Heart left ventricle (tissue), 16 donors: ENCODE measurements at regions of chr11 and their contacts with region 1.

Region 1: GRCh38 chr11:29448246-29448877 is 568.5 kb downstream of the KCNA4 start:
- DNase-seq: no peak
- ATAC-seq: peak in 1 of 4 donors; percentile 54
- H3K4me3 ChIP-seq: no peak overlapping the region
- H3K27ac ChIP-seq: no peak overlapping the region
- H3K4me1 ChIP-seq: peaks cover 0 to 3% (median 0%) of the 10 kb centered on the region in 12 donors
- H3K27me3 ChIP-seq: no peaks in the 10 kb centered on the region
- CTCF ChIP-seq: peak; percentile 18 to 68 (median 50)
- POLR2A ChIP-seq: no peak

Region 2: GRCh38 chr11:29507376-29507775 is 59.0 kb after region 1 on chr11:
- intact Hi-C with region 1: no loop called
- DNase-seq: no peak
- ATAC-seq: no peak
- H3K4me3 ChIP-seq: no peak overlapping the region
- H3K27ac ChIP-seq: no peak overlapping the region
- H3K4me1 ChIP-seq: no peaks in the 10 kb centered on the region
- H3K27me3 ChIP-seq: no peaks in the 10 kb centered on the region
- CTCF ChIP-seq: no peak
- POLR2A ChIP-seq: no peak

Region 3: DNA sequence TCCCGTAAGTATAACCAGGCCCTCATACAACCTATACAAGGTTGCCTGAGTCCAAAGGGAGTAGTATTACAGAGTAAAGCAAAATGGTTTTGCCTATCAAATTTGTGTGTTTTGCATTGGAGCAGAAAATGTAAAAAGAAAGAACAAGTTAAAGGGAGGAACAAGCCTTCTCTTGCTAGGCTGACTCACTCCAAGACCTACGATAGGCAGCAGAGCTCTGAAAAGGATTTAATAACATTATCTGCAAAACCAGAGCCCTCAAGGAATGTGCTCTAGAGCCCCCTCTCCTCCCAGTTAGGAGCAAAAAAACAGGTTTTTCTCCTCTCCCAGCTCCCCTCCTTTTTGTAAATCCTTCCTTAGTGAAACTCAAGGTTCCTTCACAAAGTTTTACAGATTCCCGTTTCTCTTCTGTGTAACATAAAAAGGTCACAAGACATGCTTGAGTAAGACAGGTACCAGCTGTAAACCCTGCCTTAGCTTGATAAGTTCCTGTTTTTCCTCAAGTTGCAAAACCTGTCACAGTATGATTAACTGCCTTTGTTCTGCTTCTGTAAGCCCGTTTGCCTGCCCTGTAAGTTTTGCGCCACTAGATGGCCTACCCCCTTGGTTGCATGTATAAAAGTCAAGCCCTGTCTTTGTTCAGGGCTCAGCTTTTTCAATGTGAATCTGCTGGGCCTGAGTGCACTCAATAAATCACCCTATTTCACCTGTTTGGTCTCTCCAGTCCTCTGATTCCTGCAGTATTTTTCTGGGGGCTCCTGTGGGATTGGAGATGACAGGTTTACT is 70.2 kb after region 1 on chr11:
- intact Hi-C with region 1: no loop called
- DNase-seq: no peak
- ATAC-seq: no peak
- H3K4me3 ChIP-seq: no peak overlapping the region
- H3K27ac ChIP-seq: no peak overlapping the region
- H3K4me1 ChIP-seq: no peaks in the 10 kb centered on the region
- H3K27me3 ChIP-seq: no peaks in the 10 kb centered on the region
- CTCF ChIP-seq: no peak
- POLR2A ChIP-seq: no peak

Region 4: GRCh38 chr11:29534836-29535235 is 86.5 kb after region 1 on chr11:
- intact Hi-C with region 1: loop called in 1 of 10 experiments (anchors 10 kb)
- DNase-seq: no peak
- ATAC-seq: no peak
- H3K4me3 ChIP-seq: no peak overlapping the region
- H3K27ac ChIP-seq: no peak overlapping the region
- H3K4me1 ChIP-seq: peaks cover 0 to 14% (median 0%) of the 10 kb centered on the region in 12 donors
- H3K27me3 ChIP-seq: no peaks in the 10 kb centered on the region
- CTCF ChIP-seq: no peak
- POLR2A ChIP-seq: no peak

Region 5: DNA sequence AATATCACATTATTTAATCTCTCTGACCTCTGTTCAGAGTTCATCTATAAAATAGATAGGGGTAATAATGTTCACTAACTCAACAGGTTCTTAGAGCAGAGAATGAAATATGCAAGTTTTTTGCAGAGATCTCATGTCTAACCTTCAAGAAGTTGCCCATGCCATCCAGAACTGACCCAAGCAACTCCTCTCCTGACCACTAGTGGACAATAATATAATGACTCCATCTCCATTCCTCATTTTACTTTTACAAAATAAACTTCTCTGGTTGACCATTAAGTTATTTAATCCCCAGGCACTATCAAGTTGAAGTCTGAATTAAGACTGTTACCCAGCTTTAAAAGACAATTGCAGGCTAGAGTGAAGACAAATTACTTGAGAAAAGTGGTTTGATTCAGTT is 185.9 kb after region 1 on chr11:
- intact Hi-C with region 1: loop called in 1 of 10 experiments (anchors 10 kb)
- DNase-seq: no peak
- ATAC-seq: no peak
- H3K4me3 ChIP-seq: no peak overlapping the region
- H3K27ac ChIP-seq: no peak overlapping the region
- H3K4me1 ChIP-seq: no peaks in the 10 kb centered on the region
- H3K27me3 ChIP-seq: no peaks in the 10 kb centered on the region
- CTCF ChIP-seq: peak in 10 of 12 donors; percentile 8 to 44 (median 26)
- POLR2A ChIP-seq: no peak

Region 6: GRCh38 chr11:29844701-29845379 is 396.5 kb after region 1 on chr11:
- intact Hi-C with region 1: loop called in 1 of 10 experiments (anchors 10 kb)
- DNase-seq: no peak
- ATAC-seq: peak in 2 of 4 donors; percentile 47
- H3K4me3 ChIP-seq: no peak overlapping the region
- H3K27ac ChIP-seq: no peak overlapping the region
- H3K4me1 ChIP-seq: no peaks in the 10 kb centered on the region
- H3K27me3 ChIP-seq: no peaks in the 10 kb centered on the region
- CTCF ChIP-seq: peak in 9 of 12 donors; percentile 10 to 47 (median 29)
- POLR2A ChIP-seq: no peak

Region 7: GRCh38 chr11:30046582-30046952 is 598.2 kb after region 1 on chr11:
- intact Hi-C with region 1: loop called in 1 of 10 experiments (anchors 5 kb)
- DNase-seq: no peak
- ATAC-seq: no peak
- H3K4me3 ChIP-seq: no peak overlapping the region
- H3K27ac ChIP-seq: no peak overlapping the region
- H3K4me1 ChIP-seq: peaks cover 0 to 8% (median 0%) of the 10 kb centered on the region in 12 donors
- H3K27me3 ChIP-seq: no peaks in the 10 kb centered on the region
- CTCF ChIP-seq: no peak
- POLR2A ChIP-seq: no peak

Region 8: DNA sequence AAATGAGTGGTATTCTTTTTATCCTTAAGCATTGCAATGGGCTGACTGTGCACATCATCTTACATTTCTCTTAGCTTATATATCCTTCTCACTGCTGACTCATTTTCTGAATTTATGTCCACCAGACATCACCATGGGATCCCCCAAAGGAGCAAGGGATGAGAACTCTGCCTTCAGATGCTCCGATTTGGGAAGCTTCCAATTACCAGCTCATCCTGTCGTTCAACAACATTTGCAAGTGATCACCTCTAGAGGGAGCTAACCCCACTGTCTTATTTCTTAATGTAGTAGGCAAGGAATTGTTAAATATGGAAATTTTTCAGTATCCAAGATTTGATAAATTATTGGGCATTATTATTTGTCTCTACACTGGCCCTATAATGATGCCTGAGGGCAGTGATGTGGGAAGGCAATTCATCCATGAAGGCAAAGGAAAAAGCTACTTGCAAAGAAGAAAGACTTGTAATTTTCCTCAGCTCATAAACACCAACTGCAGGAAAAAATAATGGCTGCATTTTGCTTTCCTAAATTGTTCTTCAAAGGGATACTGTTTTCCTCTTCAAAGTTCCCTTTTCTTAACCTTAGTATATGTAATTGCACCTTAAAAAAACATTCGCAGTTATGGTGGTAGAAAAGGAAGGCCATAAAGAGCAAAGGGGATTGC is 680.0 kb after region 1 on chr11:
- intact Hi-C with region 1: loop called in 1 of 10 experiments (anchors 10 kb)
- DNase-seq: no peak
- ATAC-seq: no peak
- H3K4me3 ChIP-seq: no peak overlapping the region
- H3K27ac ChIP-seq: no peak overlapping the region
- H3K4me1 ChIP-seq: no peaks in the 10 kb centered on the region
- H3K27me3 ChIP-seq: no peaks in the 10 kb centered on the region
- CTCF ChIP-seq: peak; percentile 39 to 73 (median 54)
- POLR2A ChIP-seq: no peak

Region 9: GRCh38 chr11:30143098-30143705 is 694.8 kb after region 1 on chr11:
- intact Hi-C with region 1: loop called in 5 of 10 experiments (anchors 5 to 10 kb)
- DNase-seq: no peak
- ATAC-seq: peak in 1 of 4 donors; percentile 15
- H3K4me3 ChIP-seq: no peak overlapping the region
- H3K27ac ChIP-seq: no peak overlapping the region
- H3K4me1 ChIP-seq: no peaks in the 10 kb centered on the region
- H3K27me3 ChIP-seq: no peaks in the 10 kb centered on the region
- CTCF ChIP-seq: peak; percentile 52 to 80 (median 70)
- POLR2A ChIP-seq: no peak